K562 (cell line): ENCODE measurements at regions of chr3 and their contacts with region 1.

Region 1: GRCh38 chr3:157104928-157105652 is 54.9 kb downstream of the CCNL1 start:
- DNase-seq: peak in 3 of 4 experiments; percentile 34 to 46 (median 40)
- ATAC-seq: peak; percentile 17
- H3K4me3 ChIP-seq: no peak overlapping the region
- H3K27ac ChIP-seq: no peak overlapping the region
- H3K4me1 ChIP-seq: peaks cover 24 to 67% of the 10 kb centered on the region in 2 experiments; a peak in 4 of 5 replicates
- H3K27me3 ChIP-seq: no peaks in the 10 kb centered on the region
- CTCF ChIP-seq: no peak
- EP300 ChIP-seq: no peak
- POLR2A ChIP-seq: no peak
- RAD21 ChIP-seq: no peak

Region 2: GRCh38 chr3:156285626-156286025 is 819.5 kb before region 1 on chr3:
- CTCF ChIA-PET with region 1: no interaction called
- POLR2A ChIA-PET with region 1: no interaction called
- in situ Hi-C with region 1: no loop called
- intact Hi-C with region 1: no loop called
- DNase-seq: no peak
- ATAC-seq: no peak
- H3K4me3 ChIP-seq: no peak overlapping the region
- H3K27ac ChIP-seq: no peak overlapping the region
- H3K4me1 ChIP-seq: no peaks in the 10 kb centered on the region
- H3K27me3 ChIP-seq: peaks cover 3% of the 10 kb centered on the region in 2 experiments; a peak in 3 of 5 replicates
- CTCF ChIP-seq: no peak
- EP300 ChIP-seq: no peak
- POLR2A ChIP-seq: no peak
- RAD21 ChIP-seq: no peak

Region 3: DNA sequence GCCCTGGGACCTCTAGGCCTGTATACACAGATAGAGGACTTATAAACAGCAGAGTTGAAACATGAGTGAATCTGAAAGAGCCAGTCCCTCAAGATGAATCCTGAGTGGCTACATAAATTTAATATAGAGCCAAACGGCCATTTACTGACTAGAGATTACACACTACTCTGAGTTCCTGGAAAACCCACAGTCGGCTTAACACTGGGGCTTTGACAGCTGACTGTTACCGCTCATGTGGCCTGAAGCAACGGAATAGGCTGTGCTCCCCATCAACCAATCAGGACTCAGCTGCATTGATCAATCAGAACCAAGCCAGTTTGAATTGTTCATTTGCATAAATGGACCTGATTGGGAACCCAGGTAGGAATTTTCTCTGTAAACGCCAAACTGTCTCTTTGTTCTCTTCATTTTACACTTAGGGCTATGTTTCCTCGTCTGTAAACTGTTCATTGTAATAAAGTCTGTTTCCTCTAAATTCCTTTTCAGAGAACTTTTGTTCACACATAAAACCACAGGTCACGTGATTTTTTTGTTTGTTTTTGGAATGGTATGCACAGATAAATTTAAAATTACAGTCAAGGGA is 14.4 kb after region 1 on chr3:
- CTCF ChIA-PET with region 1: no interaction called
- POLR2A ChIA-PET with region 1: interaction called, 14 read pairs
- in situ Hi-C with region 1: no loop called
- intact Hi-C with region 1: loop called (anchors 1 kb)
- DNase-seq: peak; percentile 56 to 88 (median 72)
- ATAC-seq: peak; percentile 81
- H3K4me3 ChIP-seq: no peak overlapping the region
- H3K27ac ChIP-seq: peak overlapping the region; percentile 64; the same call in 2 of the 3 replicates
- H3K4me1 ChIP-seq: peaks cover 20 to 48% of the 10 kb centered on the region in 2 experiments
- H3K27me3 ChIP-seq: no peaks in the 10 kb centered on the region
- CTCF ChIP-seq: no peak
- EP300 ChIP-seq: peak; percentile 91
- POLR2A ChIP-seq: peak; percentile 56
- RAD21 ChIP-seq: no peak

Region 4: GRCh38 chr3:157832588-157832987 is 727.5 kb after region 1 on chr3:
- CTCF ChIA-PET with region 1: no interaction called
- POLR2A ChIA-PET with region 1: no interaction called
- in situ Hi-C with region 1: no loop called
- intact Hi-C with region 1: no loop called
- DNase-seq: no peak
- ATAC-seq: no peak
- H3K4me3 ChIP-seq: no peak overlapping the region
- H3K27ac ChIP-seq: no peak overlapping the region
- H3K4me1 ChIP-seq: no peaks in the 10 kb centered on the region
- H3K27me3 ChIP-seq: no peaks in the 10 kb centered on the region
- CTCF ChIP-seq: no peak
- EP300 ChIP-seq: no peak
- POLR2A ChIP-seq: no peak
- RAD21 ChIP-seq: no peak